Gastrocnemius medialis (tissue), 4 donors: ENCODE measurements at regions of chr20 and their contacts with region 1.

Region 1: GRCh38 chr20:1212607-1213396 is 9.5 kb downstream of the C20orf202 start:
- DNase-seq: peak; percentile 41 to 51
- ATAC-seq: peak; percentile 86 to 96
- H3K4me3 ChIP-seq: peak overlapping the region in 1 of 4 donors; percentile 15
- H3K27ac ChIP-seq: no peak overlapping the region
- H3K4me1 ChIP-seq: peaks cover 4 to 6% of the 10 kb centered on the region in 2 donors
- H3K27me3 ChIP-seq: peaks cover 0 to 3% (median 0%) of the 10 kb centered on the region in 3 donors
- CTCF ChIP-seq: peak; percentile 60 to 82 (median 66)
- POLR2A ChIP-seq: no peak

Region 2: DNA sequence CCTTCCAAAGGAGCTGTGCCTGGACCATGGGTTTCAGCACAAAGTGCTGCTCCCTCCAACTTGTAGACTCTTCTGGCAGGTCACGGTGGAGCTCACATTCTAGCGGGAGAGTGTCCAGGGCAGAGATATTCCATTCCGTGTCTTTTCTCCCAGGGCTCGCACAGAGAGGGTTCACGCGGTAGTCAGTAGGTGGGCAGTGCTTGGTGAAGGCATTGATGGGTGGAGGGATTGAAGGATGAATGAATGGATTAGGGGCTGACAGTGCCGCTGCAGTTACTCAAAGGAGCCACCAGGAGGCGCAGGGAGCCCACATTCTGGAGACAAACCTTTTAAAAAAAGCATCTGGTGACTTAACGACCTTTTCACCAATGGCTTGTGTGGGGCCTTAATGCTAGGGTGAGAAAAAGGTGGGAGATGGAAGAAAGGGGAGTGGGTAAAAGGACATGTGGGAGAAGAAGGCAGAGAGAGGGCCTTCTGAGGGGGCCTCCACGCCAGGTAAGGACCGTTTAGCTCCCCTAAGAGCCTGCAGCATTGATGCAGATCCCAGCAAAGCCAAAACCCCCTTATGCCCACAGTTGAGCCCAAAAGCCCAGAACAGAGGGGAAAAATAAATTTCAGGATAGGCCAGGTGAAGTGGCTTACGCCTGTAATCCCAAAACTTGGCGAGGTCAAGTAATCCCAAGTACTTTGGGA is 396.7 kb before region 1 on chr20:
- in situ Hi-C with region 1: loop called (anchors 10 to 25 kb)
- intact Hi-C with region 1: loop called (anchors 2 kb)
- DNase-seq: peak; percentile 27 to 34
- ATAC-seq: peak; percentile 30 to 56
- H3K4me3 ChIP-seq: no peak overlapping the region
- H3K27ac ChIP-seq: no peak overlapping the region
- H3K4me1 ChIP-seq: peaks cover 6% of the 10 kb centered on the region in 2 donors
- H3K27me3 ChIP-seq: no peaks in the 10 kb centered on the region
- CTCF ChIP-seq: peak; percentile 95 to 98 (median 97)
- POLR2A ChIP-seq: no peak

Region 3: DNA sequence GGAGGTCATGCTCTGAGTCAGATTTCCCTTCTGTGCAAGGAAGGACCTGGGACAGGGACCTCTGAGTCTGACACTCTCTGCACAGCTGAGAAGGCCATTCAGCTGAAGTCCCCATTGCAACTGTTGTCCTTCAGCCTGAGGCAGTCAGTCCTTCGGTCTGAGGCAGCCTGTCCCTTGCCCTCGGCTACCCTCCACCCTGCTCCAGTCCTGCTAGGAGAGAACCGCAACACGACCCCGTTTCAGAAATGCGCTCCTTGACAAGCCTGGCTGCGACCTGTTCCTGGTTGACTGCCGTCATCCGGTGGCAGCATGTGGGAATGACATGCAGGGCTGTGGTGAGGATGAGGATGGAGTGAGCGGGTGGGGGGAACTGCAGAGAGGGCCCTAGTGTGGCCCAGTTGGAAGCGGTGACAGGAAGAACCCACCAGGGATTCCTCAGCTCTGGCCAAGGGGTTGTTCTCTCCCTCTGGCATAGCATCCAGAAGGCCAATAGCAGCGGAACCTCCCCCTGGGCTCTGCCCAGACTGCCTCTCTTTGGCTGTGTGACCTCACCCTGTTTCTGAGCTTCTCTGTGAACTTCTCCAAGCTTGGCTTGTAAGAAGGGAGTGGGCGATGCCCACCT is 256.4 kb before region 1 on chr20:
- in situ Hi-C with region 1: loop called in 2 of 4 experiments (anchors 25 kb)
- intact Hi-C with region 1: no loop called
- DNase-seq: peak; percentile 21 to 47
- ATAC-seq: peak; percentile 84 to 85
- H3K4me3 ChIP-seq: no peak overlapping the region
- H3K27ac ChIP-seq: no peak overlapping the region
- H3K4me1 ChIP-seq: no peaks in the 10 kb centered on the region
- H3K27me3 ChIP-seq: peaks cover 0 to 22% (median 9%) of the 10 kb centered on the region in 3 donors
- CTCF ChIP-seq: peak; percentile 94 to 98 (median 97)
- POLR2A ChIP-seq: no peak

Region 4: GRCh38 chr20:1199212-1199873 is 13.5 kb before region 1 on chr20:
- in situ Hi-C with region 1: no loop called
- intact Hi-C with region 1: no loop called
- DNase-seq: no peak
- ATAC-seq: no peak
- H3K4me3 ChIP-seq: no peak overlapping the region
- H3K27ac ChIP-seq: peak overlapping the region in 2 of 4 donors; percentile 46 to 51
- H3K4me1 ChIP-seq: no peaks in the 10 kb centered on the region
- H3K27me3 ChIP-seq: no peaks in the 10 kb centered on the region
- CTCF ChIP-seq: no peak
- POLR2A ChIP-seq: no peak

Region 5: DNA sequence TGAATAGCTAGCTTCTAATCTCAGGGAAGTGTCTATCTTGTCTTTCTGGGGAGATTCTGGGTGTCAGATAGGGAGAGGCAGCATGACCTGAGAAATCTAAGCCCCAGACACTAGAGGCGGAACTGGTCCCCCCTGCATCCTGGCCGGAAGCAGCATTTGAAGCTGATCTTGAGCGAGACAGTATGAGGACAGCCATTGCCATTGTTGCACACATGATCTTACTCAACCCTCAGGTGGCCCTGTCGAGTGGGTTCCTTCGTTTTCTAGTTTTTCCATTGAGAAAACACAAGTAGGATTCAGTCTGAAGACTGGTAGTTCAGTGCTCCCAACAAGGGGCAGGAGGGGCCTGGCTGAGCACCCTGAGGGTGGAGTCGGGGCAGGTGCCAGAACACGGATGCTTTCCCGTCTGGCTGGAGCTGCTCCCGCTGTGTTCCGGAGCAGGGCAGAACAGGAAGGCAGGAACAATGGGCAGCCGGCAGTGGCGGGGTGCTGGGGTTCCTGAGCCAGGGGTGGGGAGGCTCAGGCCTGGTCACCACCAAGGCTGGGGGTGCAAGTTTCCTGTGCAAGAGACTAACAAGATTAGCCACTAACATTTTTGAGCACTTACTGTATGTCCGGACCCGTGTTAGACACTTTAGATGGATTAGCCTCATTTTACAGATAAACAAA is 124.0 kb after region 1 on chr20:
- in situ Hi-C with region 1: no loop called
- intact Hi-C with region 1: no loop called
- DNase-seq: peak; percentile 25 to 58
- ATAC-seq: peak; percentile 57 to 70
- H3K4me3 ChIP-seq: peak overlapping the region in 1 of 4 donors; percentile 8
- H3K27ac ChIP-seq: peak overlapping the region; percentile 49 to 68 (median 56)
- H3K4me1 ChIP-seq: peaks cover 18 to 28% of the 10 kb centered on the region in 2 donors
- H3K27me3 ChIP-seq: no peaks in the 10 kb centered on the region
- CTCF ChIP-seq: no peak
- POLR2A ChIP-seq: no peak